Caco-2 (cell line): ENCODE measurements at regions of chr20 and their contacts with region 1.

Region 1: GRCh38 chr20:14700639-14700960 is 363.2 kb upstream of the FLRT3 start:
- DNase-seq: peak in 1 of 2 experiments; percentile 29
- H3K4me3 ChIP-seq: no peak overlapping the region
- H3K4me3 Mint-ChIP-seq: no peak overlapping the region
- H3K27ac Mint-ChIP-seq: no peak overlapping the region
- H3K4me1 ChIP-seq: peaks cover 36% of the 10 kb centered on the region
- H3K4me1 Mint-ChIP-seq: peaks cover 21% of the 10 kb centered on the region
- H3K27me3 ChIP-seq: no peaks in the 10 kb centered on the region
- H3K27me3 Mint-ChIP-seq: no peaks in the 10 kb centered on the region
- CTCF ChIP-seq: no peak

Region 2: GRCh38 chr20:14597206-14597715 is 103.3 kb before region 1 on chr20:
- CTCF ChIA-PET with region 1: no interaction called
- POLR2A ChIA-PET with region 1: no interaction called
- intact Hi-C with region 1: loop called (anchors 1 kb)
- DNase-seq: no peak
- H3K4me3 ChIP-seq: no peak overlapping the region
- H3K4me3 Mint-ChIP-seq: no peak overlapping the region
- H3K27ac Mint-ChIP-seq: no peak overlapping the region
- H3K4me1 ChIP-seq: no peaks in the 10 kb centered on the region
- H3K4me1 Mint-ChIP-seq: no peaks in the 10 kb centered on the region
- H3K27me3 ChIP-seq: no peaks in the 10 kb centered on the region
- H3K27me3 Mint-ChIP-seq: no peaks in the 10 kb centered on the region
- CTCF ChIP-seq: no peak

Region 3: DNA sequence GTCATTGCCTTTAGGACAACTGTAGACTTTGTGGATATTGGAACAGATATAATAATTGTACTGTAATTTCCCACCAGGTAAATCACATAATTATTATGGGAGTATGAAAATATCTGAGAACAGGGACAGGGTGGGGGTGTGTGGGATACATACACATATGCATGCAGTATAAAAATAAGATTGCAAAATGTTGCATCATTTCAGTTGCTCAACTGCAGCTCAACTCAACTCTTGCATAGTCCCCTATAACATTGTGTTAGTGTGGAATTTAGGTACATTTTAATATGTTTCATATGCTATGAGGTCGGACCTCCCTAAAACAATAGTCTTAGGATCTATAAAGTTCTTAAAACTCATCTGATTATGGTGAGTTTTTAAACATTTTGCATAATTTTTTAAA is 88.2 kb before region 1 on chr20:
- CTCF ChIA-PET with region 1: no interaction called
- POLR2A ChIA-PET with region 1: no interaction called
- intact Hi-C with region 1: no loop called
- DNase-seq: no peak
- H3K4me3 ChIP-seq: no peak overlapping the region
- H3K4me3 Mint-ChIP-seq: no peak overlapping the region
- H3K27ac Mint-ChIP-seq: no peak overlapping the region
- H3K4me1 ChIP-seq: peaks cover 43% of the 10 kb centered on the region
- H3K4me1 Mint-ChIP-seq: peaks cover 26% of the 10 kb centered on the region
- H3K27me3 ChIP-seq: no peaks in the 10 kb centered on the region
- H3K27me3 Mint-ChIP-seq: no peaks in the 10 kb centered on the region
- CTCF ChIP-seq: no peak

Region 4: GRCh38 chr20:14687313-14687712 is 13.3 kb before region 1 on chr20:
- CTCF ChIA-PET with region 1: no interaction called
- POLR2A ChIA-PET with region 1: no interaction called
- intact Hi-C with region 1: no loop called
- DNase-seq: no peak
- H3K4me3 ChIP-seq: no peak overlapping the region
- H3K4me3 Mint-ChIP-seq: no peak overlapping the region
- H3K27ac Mint-ChIP-seq: no peak overlapping the region
- H3K4me1 ChIP-seq: no peaks in the 10 kb centered on the region
- H3K4me1 Mint-ChIP-seq: no peaks in the 10 kb centered on the region
- H3K27me3 ChIP-seq: no peaks in the 10 kb centered on the region
- H3K27me3 Mint-ChIP-seq: no peaks in the 10 kb centered on the region
- CTCF ChIP-seq: no peak